Sigmoid colon (tissue), 7 donors: ENCODE measurements at regions of chr10 and their contacts with region 1.

Region 1: DNA sequence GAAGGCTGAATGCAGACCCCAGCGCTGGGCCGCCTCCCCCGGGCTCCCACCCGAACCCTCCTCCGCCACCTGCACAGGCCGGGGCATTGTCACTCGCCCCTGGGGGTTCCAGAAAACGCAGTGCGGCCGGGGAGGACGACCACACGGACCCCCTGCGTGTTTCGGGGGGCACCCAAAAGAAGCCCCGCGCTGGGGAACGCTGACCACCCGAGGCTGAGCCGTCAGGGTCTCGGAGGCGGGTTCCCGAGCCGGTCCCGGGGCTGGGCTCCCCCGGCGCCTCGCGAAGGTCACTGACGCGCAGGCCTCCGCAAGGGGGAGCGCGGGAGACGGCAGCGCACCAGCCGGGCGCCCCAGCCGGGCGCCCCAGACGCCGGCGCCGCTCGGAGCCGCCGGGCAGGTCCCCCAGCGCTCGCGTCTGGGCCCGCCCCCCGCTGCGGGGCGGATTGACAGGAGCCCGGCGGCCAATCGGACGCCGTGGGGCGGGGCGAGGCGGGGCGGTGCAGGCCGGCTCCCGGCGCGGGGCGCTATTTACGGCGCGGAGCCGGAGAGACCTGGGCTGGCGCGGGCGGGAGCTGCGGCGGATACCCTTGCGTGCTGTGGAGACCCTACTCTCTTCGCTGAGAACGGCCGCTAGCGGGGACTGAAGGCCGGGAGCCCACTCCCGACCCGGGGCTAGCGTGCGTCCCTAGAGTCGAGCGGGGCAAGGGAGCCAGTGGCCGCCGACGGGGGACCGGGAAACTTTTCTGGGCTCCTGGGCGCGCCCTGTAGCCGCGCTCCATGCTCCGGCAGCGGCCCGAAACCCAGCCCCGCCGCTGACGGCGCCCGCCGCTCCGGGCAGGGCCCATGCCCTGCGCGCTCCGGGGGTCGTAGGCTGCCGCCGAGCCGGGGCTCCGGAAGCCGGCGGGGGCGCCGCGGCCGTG is at the start of gene BAMBI:
- DNase-seq: peak; percentile 94
- H3K4me3 ChIP-seq: peak within 1 kb of the TSS; percentile 59 to 93 (median 78)
- H3K27ac ChIP-seq: peak within 1 kb of the TSS; percentile 64 to 86 (median 77)
- H3K4me1 ChIP-seq: peaks cover 0 to 49% (median 40%) of the 10 kb centered on the region in 4 donors
- H3K27me3 ChIP-seq: peaks cover 0 to 11% (median 0%) of the 10 kb centered on the region in 3 donors
- CTCF ChIP-seq: peak; percentile 36 to 60 (median 53)
- EP300 ChIP-seq: no peak
- POLR2A ChIP-seq: peak; percentile 40 to 47
- total RNA-seq, gene BAMBI: 3.6 to 5.3 (median 5.0) TPM

Region 2: DNA sequence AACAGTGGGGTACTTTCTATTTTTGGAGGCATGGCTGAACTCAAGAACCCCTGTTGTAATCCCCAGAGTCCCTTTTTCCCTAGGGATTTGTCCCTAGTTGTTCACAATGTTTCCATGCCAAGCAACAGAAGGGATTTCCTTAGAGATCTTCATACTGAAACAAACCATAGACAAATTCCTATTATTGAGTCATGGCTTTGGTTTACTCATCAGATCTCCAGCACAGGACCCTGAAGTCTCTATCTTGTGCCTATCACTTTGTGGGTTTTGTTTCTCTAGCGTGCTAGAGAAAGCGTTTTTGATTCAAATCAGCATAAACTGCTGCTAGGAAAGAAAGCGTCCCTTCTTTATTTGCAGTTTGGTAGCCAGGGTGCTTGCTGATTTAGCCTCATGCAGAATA is 165.1 kb after region 1 on chr10:
- intact Hi-C with region 1: no loop called
- DNase-seq: no peak
- H3K4me3 ChIP-seq: no peak overlapping the region
- H3K27ac ChIP-seq: peak overlapping the region in 1 of 4 donors; percentile 54
- H3K4me1 ChIP-seq: peaks cover 0 to 19% (median 13%) of the 10 kb centered on the region in 4 donors
- H3K27me3 ChIP-seq: no peaks in the 10 kb centered on the region
- CTCF ChIP-seq: no peak
- EP300 ChIP-seq: no peak
- POLR2A ChIP-seq: no peak

Region 3: DNA sequence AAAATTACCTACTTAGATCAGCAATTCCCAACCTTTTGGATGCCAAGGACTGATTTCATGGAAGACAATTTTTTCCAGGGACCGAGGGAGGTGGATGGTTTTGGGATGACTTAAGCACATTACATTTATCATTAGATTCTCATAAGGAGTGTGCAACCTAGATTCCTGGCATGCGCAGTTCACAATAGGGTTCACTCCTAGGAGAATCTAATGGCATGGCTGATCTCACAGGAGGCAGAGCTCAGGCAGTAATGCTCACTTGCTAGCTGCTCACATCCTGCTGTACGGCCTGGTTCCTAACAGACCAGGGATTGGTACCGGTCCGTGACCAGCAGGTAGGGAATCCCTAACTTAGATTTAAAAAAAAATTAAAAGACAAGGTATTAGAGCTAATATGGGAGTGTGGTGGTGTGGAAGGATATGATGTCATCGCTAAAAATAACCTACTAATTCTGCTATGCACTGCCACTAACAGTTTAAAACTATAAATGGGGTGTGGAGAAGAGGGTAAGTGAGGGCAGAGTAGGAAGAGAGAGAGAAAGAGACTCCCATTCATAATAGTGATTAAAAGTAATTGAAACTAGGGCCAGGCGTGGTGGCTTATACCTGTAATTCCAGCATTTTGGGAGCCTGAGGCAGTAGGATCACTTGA is 282.7 kb after region 1 on chr10:
- intact Hi-C with region 1: no loop called
- DNase-seq: no peak
- H3K4me3 ChIP-seq: no peak overlapping the region
- H3K27ac ChIP-seq: no peak overlapping the region
- H3K4me1 ChIP-seq: no peaks in the 10 kb centered on the region
- H3K27me3 ChIP-seq: no peaks in the 10 kb centered on the region
- CTCF ChIP-seq: no peak
- EP300 ChIP-seq: no peak
- POLR2A ChIP-seq: no peak

Region 4: DNA sequence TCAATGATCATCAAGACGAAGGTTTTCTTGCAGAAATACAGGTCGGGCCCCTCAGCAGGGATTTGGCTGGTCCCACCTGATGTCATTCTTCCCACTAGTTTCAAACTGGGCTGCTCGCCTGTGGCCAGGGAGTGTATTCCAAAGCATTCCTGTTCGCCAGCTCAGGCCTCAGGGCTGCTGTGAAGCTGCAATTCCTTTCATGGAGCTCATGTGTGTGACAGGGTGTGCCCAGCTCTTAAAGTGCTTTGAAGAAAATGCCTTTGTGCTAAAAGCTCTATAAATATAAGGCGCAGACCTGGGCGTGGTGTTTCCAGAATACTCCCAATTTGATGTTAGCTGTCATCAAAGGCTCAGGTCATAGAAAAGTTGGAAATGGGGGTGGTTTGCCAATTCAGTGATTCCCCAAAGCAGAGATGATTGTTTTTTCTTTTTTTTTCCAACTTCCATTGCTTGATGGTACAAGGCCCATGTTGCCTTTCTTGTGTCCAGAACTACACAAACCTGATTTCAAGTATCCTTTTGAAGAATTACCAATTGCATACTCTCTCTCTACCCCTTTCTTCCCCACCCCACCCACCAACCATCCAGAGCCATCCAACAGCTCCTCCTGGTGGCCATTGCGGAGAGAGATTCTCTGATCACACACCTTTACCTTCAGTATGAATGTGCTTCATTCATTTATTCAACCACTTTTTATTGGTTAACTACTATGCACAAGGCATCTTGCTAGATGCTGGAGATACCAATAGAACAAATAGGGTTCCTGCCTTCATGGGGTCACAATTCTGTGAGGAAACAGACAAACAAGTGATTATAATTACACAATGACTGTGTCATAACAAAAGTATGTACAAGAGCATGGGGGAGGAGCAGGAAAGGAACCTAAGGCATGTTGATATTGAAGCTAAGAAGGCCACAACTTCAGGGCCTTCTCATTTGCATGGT is 314.4 kb after region 1 on chr10:
- intact Hi-C with region 1: loop called (anchors 1 kb)
- DNase-seq: no peak
- H3K4me3 ChIP-seq: no peak overlapping the region
- H3K27ac ChIP-seq: peak overlapping the region in 2 of 4 donors; percentile 11 to 56
- H3K4me1 ChIP-seq: peaks cover 0 to 13% (median 9%) of the 10 kb centered on the region in 4 donors
- H3K27me3 ChIP-seq: no peaks in the 10 kb centered on the region
- CTCF ChIP-seq: peak; percentile 22 to 76 (median 68)
- EP300 ChIP-seq: no peak
- POLR2A ChIP-seq: no peak